Esophagus squamous epithelium (tissue), 5 donors: ENCODE measurements at regions of chr2 and their contacts with region 1.

Region 1: GRCh38 chr2:120174963-120175581 is 48.1 kb downstream of the TMEM185B start:
- DNase-seq: no peak
- H3K4me3 ChIP-seq: peak overlapping the region in 1 of 4 donors; percentile 43
- H3K27ac ChIP-seq: no peak overlapping the region
- H3K4me1 ChIP-seq: peaks cover 3 to 31% (median 16%) of the 10 kb centered on the region in 3 donors
- H3K27me3 ChIP-seq: no peaks in the 10 kb centered on the region
- CTCF ChIP-seq: peak; percentile 39 to 79 (median 70)
- POLR2A ChIP-seq: no peak

Region 2: DNA sequence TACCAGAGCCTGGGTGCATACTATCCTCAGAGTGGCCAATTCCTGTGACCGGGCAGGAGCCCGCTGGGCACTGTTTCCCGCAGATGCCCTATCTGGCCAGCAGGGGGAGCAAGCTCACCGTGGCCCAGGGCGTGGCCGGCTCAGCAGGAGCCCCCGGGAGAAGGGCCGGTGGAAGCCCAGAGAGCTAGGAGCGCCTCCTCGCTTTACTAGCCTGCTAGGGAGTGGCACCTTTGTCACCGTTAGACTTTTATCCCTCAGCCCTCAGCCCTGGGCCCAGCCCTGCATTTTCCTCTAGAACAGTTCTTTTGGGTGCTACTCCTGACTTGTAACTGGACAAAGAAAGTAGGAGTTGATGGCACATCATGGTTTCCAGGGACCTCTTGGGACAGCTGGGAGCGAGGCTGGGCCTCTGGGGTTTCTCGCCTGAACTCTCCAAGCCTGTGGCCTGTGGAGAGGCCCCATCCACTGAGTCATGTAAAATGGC is 472.1 kb before region 1 on chr2:
- intact Hi-C with region 1: loop called (anchors 10 kb)
- DNase-seq: no peak
- H3K4me3 ChIP-seq: no peak overlapping the region
- H3K27ac ChIP-seq: no peak overlapping the region
- H3K4me1 ChIP-seq: peaks cover 0 to 18% (median 0%) of the 10 kb centered on the region in 3 donors
- H3K27me3 ChIP-seq: no peaks in the 10 kb centered on the region
- CTCF ChIP-seq: peak; percentile 87 to 97 (median 90)
- POLR2A ChIP-seq: no peak

Region 3: GRCh38 chr2:120323214-120323613 is 148.1 kb after region 1 on chr2:
- intact Hi-C with region 1: no loop called
- DNase-seq: no peak
- H3K4me3 ChIP-seq: no peak overlapping the region
- H3K27ac ChIP-seq: no peak overlapping the region
- H3K4me1 ChIP-seq: peaks cover 0 to 27% (median 9%) of the 10 kb centered on the region in 3 donors
- H3K27me3 ChIP-seq: peaks cover 0 to 65% (median 0%) of the 10 kb centered on the region in 4 donors
- CTCF ChIP-seq: no peak
- POLR2A ChIP-seq: no peak